CD4-positive, alpha-beta T cell (primary cell): ENCODE measurements at regions of chr4 and their contacts with region 1.

Region 1: GRCh38 chr4:112523764-112524505 is 8.0 kb upstream of the NEUROG2 start:
- DNase-seq: peak; percentile 49 to 83 (median 70)
- ATAC-seq: peak; percentile 82
- H3K4me3 ChIP-seq: peak overlapping the region; percentile 51
- H3K4me3 Mint-ChIP-seq: peak overlapping the region; percentile 89
- H3K27ac ChIP-seq: no peak overlapping the region
- H3K27ac Mint-ChIP-seq: no peak overlapping the region
- H3K4me1 ChIP-seq: peaks cover 35% of the 10 kb centered on the region
- H3K4me1 Mint-ChIP-seq: peaks cover 51% of the 10 kb centered on the region
- H3K27me3 ChIP-seq: peaks cover 50 to 51% of the 10 kb centered on the region in 2 experiments
- H3K27me3 Mint-ChIP-seq: peaks cover 78% of the 10 kb centered on the region
- CTCF ChIP-seq: peak; percentile 74

Region 2: DNA sequence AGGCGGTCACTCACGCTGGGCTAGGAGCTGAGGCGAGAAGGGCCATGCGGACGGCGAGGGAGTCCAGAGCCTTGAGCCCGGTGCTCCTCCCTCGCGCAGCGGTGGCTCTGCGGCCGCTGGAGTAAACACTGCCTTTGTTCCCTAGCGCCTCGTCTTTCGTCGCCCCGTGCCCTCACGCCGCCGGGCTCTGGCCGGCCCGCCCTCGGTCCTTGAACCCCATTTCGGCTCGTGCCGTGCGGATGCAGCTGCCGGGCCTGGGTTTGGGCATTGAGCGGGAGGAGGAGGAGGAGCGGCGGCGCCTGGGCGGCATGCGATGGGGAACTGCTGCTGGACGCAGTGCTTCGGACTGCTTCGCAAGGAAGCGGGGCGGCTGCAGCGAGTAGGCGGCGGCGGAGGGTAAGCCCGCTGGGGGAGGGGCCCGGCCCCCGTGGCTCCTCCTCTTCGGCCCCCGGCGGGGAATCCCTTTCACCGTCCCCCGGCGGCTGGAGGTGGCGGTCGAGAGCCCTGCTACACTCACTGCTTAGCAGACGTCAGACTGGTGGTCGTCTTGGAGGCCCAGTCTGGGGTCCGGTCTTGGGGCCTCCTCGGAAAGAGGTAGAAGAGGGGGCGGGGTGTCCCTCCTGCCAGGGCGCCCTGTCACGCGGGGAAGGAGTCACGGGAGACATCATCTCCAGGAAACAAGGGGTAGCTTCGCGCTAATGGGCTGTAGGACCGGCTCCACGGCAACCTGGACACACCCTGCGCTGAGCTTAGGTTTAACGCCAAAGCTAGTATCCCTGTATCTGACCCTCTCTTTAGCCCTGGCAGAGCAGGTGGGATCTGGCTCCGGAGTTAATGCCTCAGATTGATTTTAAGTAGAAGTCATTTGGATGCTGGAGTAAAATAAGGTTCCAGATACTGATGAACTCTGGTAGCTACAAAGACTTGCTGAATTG is 291.9 kb before region 1 on chr4 and contains the start of gene AP1AR:
- CTCF ChIA-PET with region 1: interaction called, 3 read pairs
- POLR2A ChIA-PET with region 1: interaction called, 4 read pairs
- intact Hi-C with region 1: loop called (anchors 5 kb)
- DNase-seq: peak; percentile 53 to 90 (median 69)
- ATAC-seq: peak; percentile 50
- H3K4me3 ChIP-seq: peak within 1 kb of the TSS; percentile 93
- H3K4me3 Mint-ChIP-seq: peak within 1 kb of the TSS; percentile 99
- H3K27ac ChIP-seq: peak within 1 kb of the TSS; percentile 93 to 96
- H3K27ac Mint-ChIP-seq: peak within 1 kb of the TSS; percentile 98
- H3K4me1 ChIP-seq: peaks cover 13% of the 10 kb centered on the region
- H3K4me1 Mint-ChIP-seq: peaks cover 55% of the 10 kb centered on the region
- H3K27me3 ChIP-seq: no peaks in the 10 kb centered on the region
- H3K27me3 Mint-ChIP-seq: no peaks in the 10 kb centered on the region
- CTCF ChIP-seq: no peak
- total RNA-seq, gene AP1AR: 3.7 to 4.8 TPM